ENCODE measurements at regions of chr6 and their contacts with region 1.

Region 1: GRCh38 chr6:14734416-14735340 is 511.2 kb upstream of the JARID2 start:
- DNase-seq: peak; percentile 95 to 99 (median 99)
- H3K4me3 ChIP-seq: no peak overlapping the region
- H3K4me3 Mint-ChIP-seq: peak overlapping the region; percentile 30 to 62
- H3K27ac ChIP-seq: peak overlapping the region; percentile 60 to 99
- H3K27ac Mint-ChIP-seq: peak overlapping the region; percentile 95 to 100 (median 99)
- H3K4me1 ChIP-seq: peaks cover 60 to 63% of the 10 kb centered on the region in 2 donors
- H3K4me1 Mint-ChIP-seq: peaks cover 89% of the 10 kb centered on the region
- H3K27me3 ChIP-seq: no peaks in the 10 kb centered on the region
- H3K27me3 Mint-ChIP-seq: no peaks in the 10 kb centered on the region
- CTCF ChIP-seq: no peak

Region 2: GRCh38 chr6:14638906-14639761 is 95.5 kb before region 1 on chr6:
- intact Hi-C with region 1: loop called in 1 of 2 experiments (anchors 2 kb)
- DNase-seq: peak; percentile 74 to 79 (median 75)
- H3K4me3 ChIP-seq: peak overlapping the region; percentile 35 to 69 (median 57)
- H3K4me3 Mint-ChIP-seq: peak overlapping the region; percentile 81 to 95
- H3K27ac ChIP-seq: peak overlapping the region; percentile 35 to 89
- H3K27ac Mint-ChIP-seq: peak overlapping the region; percentile 69 to 98 (median 96)
- H3K4me1 ChIP-seq: peaks cover 28 to 38% of the 10 kb centered on the region in 2 donors
- H3K4me1 Mint-ChIP-seq: peaks cover 50% of the 10 kb centered on the region
- H3K27me3 ChIP-seq: no peaks in the 10 kb centered on the region
- H3K27me3 Mint-ChIP-seq: peaks cover 0 to 9% (median 0%) of the 10 kb centered on the region in 3 donors
- CTCF ChIP-seq: no peak

Region 3: GRCh38 chr6:14665827-14666724 is 68.6 kb before region 1 on chr6:
- intact Hi-C with region 1: loop called in 1 of 2 experiments (anchors 5 kb)
- DNase-seq: peak; percentile 99 to 100 (median 100)
- H3K4me3 ChIP-seq: no peak overlapping the region
- H3K4me3 Mint-ChIP-seq: peak overlapping the region in 1 of 2 donors; percentile 69
- H3K27ac ChIP-seq: peak overlapping the region; percentile 75 to 89
- H3K27ac Mint-ChIP-seq: peak overlapping the region; percentile 94 to 99 (median 99)
- H3K4me1 ChIP-seq: peaks cover 31 to 33% of the 10 kb centered on the region in 2 donors
- H3K4me1 Mint-ChIP-seq: peaks cover 32% of the 10 kb centered on the region
- H3K27me3 ChIP-seq: no peaks in the 10 kb centered on the region
- H3K27me3 Mint-ChIP-seq: peaks cover 0 to 2% (median 0%) of the 10 kb centered on the region in 3 donors
- CTCF ChIP-seq: no peak

Region 4: GRCh38 chr6:14876778-14877613 is 142.3 kb after region 1 on chr6:
- intact Hi-C with region 1: loop called in 1 of 2 experiments (anchors 5 kb)
- DNase-seq: peak; percentile 95 to 99 (median 99)
- H3K4me3 ChIP-seq: no peak overlapping the region
- H3K4me3 Mint-ChIP-seq: peak overlapping the region in 1 of 2 donors; percentile 67
- H3K27ac ChIP-seq: peak overlapping the region; percentile 95 to 99
- H3K27ac Mint-ChIP-seq: peak overlapping the region; percentile 99 to 100 (median 100)
- H3K4me1 ChIP-seq: peaks cover 86 to 90% of the 10 kb centered on the region in 2 donors
- H3K4me1 Mint-ChIP-seq: peaks cover 95% of the 10 kb centered on the region
- H3K27me3 ChIP-seq: no peaks in the 10 kb centered on the region
- H3K27me3 Mint-ChIP-seq: peaks cover 0 to 2% (median 0%) of the 10 kb centered on the region in 3 donors
- CTCF ChIP-seq: no peak

Region 5: GRCh38 chr6:15062516-15063252 is 328.0 kb after region 1 on chr6:
- intact Hi-C with region 1: loop called in 1 of 2 experiments (anchors 10 kb)
- DNase-seq: peak; percentile 92 to 96 (median 94)
- H3K4me3 ChIP-seq: no peak overlapping the region
- H3K4me3 Mint-ChIP-seq: no peak overlapping the region
- H3K27ac ChIP-seq: peak overlapping the region; percentile 76 to 98
- H3K27ac Mint-ChIP-seq: peak overlapping the region; percentile 91 to 99 (median 97)
- H3K4me1 ChIP-seq: peaks cover 65 to 70% of the 10 kb centered on the region in 2 donors
- H3K4me1 Mint-ChIP-seq: peaks cover 60% of the 10 kb centered on the region
- H3K27me3 ChIP-seq: no peaks in the 10 kb centered on the region
- H3K27me3 Mint-ChIP-seq: peaks cover 0 to 9% (median 0%) of the 10 kb centered on the region in 3 donors
- CTCF ChIP-seq: no peak

Region 6: GRCh38 chr6:15245361-15246216 is 510.9 kb after region 1 on chr6 and contains the start of gene JARID2:
- intact Hi-C with region 1: loop called in 1 of 2 experiments (anchors 5 kb)
- DNase-seq: peak; percentile 97 to 98 (median 98)
- H3K4me3 ChIP-seq: peak within 1 kb of the TSS; percentile 90 to 100 (median 98)
- H3K4me3 Mint-ChIP-seq: peak within 1 kb of the TSS; percentile 99 to 100
- H3K27ac ChIP-seq: peak within 1 kb of the TSS; percentile 71 to 90
- H3K27ac Mint-ChIP-seq: peak within 1 kb of the TSS; percentile 96 to 99 (median 98)
- H3K4me1 ChIP-seq: peaks cover 33 to 44% of the 10 kb centered on the region in 2 donors
- H3K4me1 Mint-ChIP-seq: peaks cover 25% of the 10 kb centered on the region
- H3K27me3 ChIP-seq: no peaks in the 10 kb centered on the region
- H3K27me3 Mint-ChIP-seq: no peaks in the 10 kb centered on the region
- CTCF ChIP-seq: no peak
- polyA plus RNA-seq, gene JARID2: 6.8 to 17.5 (median 12.5) TPM